Prostate gland (tissue), 2 donors: ENCODE measurements at regions of chr1 and their contacts with region 1.

Region 1: GRCh38 chr1:66383611-66384010 is 150.3 kb upstream of the SGIP1 start:
- DNase-seq: no peak
- H3K4me3 ChIP-seq: no peak overlapping the region
- H3K27ac ChIP-seq: no peak overlapping the region
- H3K4me1 ChIP-seq: no peaks in the 10 kb centered on the region
- H3K27me3 ChIP-seq: no peaks in the 10 kb centered on the region
- CTCF ChIP-seq: no peak
- POLR2A ChIP-seq: no peak

Region 2: DNA sequence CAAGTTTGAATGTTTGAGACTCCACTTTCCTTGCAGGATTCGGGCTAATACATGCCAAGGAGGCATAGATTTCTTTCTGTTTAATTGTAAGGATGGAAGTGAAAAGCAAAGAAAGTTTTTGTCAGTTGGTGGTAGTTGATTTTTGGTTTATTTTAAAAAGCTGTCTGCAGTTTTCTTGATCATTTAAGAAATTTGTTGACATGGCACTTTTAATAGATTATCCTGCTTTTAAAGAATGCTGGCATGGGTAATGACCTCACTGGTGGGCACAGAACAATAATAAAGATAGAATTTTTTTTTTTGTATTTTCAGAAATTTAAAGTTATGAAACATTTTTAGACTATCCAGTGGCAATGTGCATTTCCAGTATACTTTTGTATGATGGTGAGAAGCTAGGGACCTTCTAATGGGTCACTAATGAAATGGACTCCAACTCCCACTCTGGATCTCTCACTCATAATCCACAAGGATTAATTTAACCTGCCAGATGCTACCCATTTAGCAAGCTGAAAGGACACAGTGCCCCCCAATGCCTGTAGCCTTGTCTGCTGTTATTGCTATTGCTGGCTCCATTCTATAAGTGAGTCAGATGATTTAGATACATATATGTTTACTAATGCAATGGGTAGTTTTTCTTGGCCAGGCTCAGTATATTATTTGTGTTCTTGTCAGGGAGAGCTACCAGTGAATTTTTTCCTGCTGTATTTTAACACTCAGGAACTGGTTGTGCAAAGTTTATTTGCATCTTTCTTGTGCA is 39.9 kb before region 1 on chr1:
- intact Hi-C with region 1: loop called (anchors 2 kb)
- DNase-seq: no peak
- H3K4me3 ChIP-seq: no peak overlapping the region
- H3K27ac ChIP-seq: no peak overlapping the region
- H3K4me1 ChIP-seq: no peaks in the 10 kb centered on the region
- H3K27me3 ChIP-seq: no peaks in the 10 kb centered on the region
- CTCF ChIP-seq: no peak
- POLR2A ChIP-seq: no peak

Region 3: DNA sequence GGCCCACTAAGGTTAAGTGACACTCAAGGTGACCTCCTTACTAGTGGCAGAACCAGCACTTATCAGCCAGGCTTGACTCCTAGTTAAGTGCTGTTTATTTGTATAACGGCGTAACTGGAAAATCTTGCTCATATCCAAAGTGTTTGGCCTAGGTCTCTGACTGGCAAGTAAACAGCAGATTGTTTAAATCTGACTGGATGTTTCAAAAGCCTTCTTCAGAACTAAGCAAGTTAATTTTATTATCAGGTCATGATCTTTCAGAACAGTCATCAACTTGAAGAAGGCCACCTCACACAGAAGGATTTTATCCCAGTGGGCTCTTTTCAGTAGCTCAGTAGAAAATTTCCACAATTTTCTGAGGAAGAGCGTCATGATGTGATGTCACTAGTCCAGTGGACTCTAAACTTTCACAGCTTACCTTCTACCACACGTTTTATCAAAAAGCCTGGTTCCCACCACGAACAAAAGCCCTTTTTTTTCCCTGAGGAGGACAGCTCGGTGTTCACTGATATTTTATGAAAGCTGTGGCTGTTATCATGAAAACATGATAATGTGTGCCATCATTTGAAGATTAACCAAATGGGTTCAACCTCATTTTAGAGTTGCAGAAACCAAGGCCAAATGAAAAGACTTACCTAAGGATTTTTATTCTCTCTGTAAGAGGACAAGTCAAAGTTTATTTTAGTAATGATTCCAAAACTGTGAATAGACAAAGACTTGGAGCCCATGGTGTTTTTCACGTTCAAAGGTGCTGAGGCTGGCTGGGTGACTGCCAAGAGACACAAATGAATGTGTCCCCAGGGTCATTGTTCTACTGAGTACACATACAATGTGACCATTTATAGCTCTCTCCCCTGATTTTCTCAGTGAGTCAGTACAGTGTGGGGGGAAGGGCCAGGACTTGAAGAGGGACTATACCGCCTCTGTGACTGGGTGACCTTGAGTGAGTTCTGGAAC is 159.5 kb after region 1 on chr1:
- intact Hi-C with region 1: no loop called
- DNase-seq: peak; percentile 9
- H3K4me3 ChIP-seq: no peak overlapping the region
- H3K27ac ChIP-seq: peak overlapping the region in 1 of 2 donors; percentile 41
- H3K4me1 ChIP-seq: no peaks in the 10 kb centered on the region
- H3K27me3 ChIP-seq: no peaks in the 10 kb centered on the region
- CTCF ChIP-seq: no peak
- POLR2A ChIP-seq: no peak

Region 4: DNA sequence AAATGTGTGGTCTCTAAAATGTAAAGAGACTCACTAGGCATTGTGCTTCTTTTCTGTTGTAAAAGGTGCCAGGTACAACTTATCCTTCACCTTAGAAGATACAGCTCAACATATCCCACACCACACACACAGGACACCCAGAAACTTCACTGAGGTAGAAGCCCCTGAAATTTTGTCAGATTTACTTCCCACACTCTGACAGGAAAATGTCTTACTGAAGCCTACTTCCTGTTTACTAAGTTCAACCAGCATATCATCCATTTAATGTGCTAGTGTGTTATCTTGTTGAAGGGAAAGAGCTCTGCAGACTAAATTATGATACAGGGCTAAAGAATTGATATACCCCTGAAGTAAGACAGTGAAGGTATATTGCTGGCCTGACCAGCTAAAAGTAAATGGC is 457.3 kb after region 1 on chr1:
- intact Hi-C with region 1: no loop called
- DNase-seq: no peak
- H3K4me3 ChIP-seq: no peak overlapping the region
- H3K27ac ChIP-seq: no peak overlapping the region
- H3K4me1 ChIP-seq: no peaks in the 10 kb centered on the region
- H3K27me3 ChIP-seq: no peaks in the 10 kb centered on the region
- CTCF ChIP-seq: no peak
- POLR2A ChIP-seq: no peak